Kidney (tissue), 22 donors: ENCODE measurements at regions of chr19 and their contacts with region 1.

Region 1: GRCh38 chr19:3249408-3249807 is 24.9 kb downstream of the CELF5 start:
- DNase-seq: no peak
- H3K4me3 ChIP-seq: no peak overlapping the region
- H3K27ac ChIP-seq: no peak overlapping the region
- H3K4me1 ChIP-seq: no peaks in the 10 kb centered on the region
- H3K27me3 ChIP-seq: no peaks in the 10 kb centered on the region
- CTCF ChIP-seq: no peak

Region 2: DNA sequence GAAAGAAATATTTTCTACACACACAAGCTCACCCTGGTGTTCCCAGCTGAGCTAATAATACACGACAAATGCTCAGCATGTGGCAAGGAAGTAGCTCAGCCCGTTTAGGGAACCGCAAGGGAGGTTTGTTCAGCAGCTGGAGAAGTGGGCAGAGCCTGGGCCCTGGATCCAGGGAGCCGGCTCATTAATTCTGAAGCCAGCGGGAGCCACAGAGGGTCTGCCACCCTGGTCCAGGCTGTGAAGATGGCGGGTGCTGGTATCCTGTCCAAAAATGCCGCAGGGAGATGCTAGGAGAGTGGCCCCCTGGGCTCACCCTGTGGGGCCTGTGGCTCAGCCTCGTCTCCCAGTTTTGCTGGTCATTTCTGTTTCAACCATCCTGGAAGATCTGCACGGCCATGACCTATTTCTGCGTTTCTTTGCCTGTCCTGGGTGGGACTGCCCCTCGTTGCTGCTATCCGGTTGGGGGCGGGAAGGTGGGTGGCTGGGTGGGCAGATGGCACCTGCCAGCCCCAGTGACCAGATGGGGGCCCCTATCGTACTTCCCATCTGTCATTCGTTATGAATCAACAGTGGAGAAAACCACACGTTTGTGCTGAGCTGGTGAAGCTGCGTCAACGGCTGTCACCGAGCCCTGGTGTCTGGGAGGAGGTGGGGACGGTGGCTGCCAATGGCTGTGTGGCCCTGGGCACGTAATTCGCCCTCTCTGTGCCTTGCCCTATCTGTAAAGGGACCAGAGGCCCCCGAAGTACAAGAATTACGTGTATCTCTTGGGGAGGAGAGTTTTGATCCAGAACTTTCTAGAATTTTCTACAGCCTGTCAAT is 116.2 kb before region 1 on chr19:
- intact Hi-C with region 1: no loop called
- DNase-seq: peak in 3 of 5 donors; percentile 62 to 80 (median 71)
- H3K4me3 ChIP-seq: no peak overlapping the region
- H3K27ac ChIP-seq: no peak overlapping the region
- H3K4me1 ChIP-seq: no peaks in the 10 kb centered on the region
- H3K27me3 ChIP-seq: no peaks in the 10 kb centered on the region
- CTCF ChIP-seq: no peak

Region 3: GRCh38 chr19:3195948-3196695 is 53.3 kb before region 1 on chr19:
- intact Hi-C with region 1: loop called (anchors 5 kb)
- DNase-seq: no peak
- H3K4me3 ChIP-seq: no peak overlapping the region
- H3K27ac ChIP-seq: no peak overlapping the region
- H3K4me1 ChIP-seq: no peaks in the 10 kb centered on the region
- H3K27me3 ChIP-seq: no peaks in the 10 kb centered on the region
- CTCF ChIP-seq: no peak